ENCODE measurements at regions of chr11 and their contacts with region 1.

Region 1: GRCh38 chr11:72722050-72722748 is 30.0 kb downstream of the ARAP1 start:
- DNase-seq: peak; percentile 80
- H3K4me3 Mint-ChIP-seq: peak overlapping the region; percentile 94
- H3K27ac Mint-ChIP-seq: peak overlapping the region; percentile 96
- H3K4me1 Mint-ChIP-seq: peaks cover 70% of the 10 kb centered on the region
- H3K27me3 Mint-ChIP-seq: no peaks in the 10 kb centered on the region

Region 2: GRCh38 chr11:72683782-72684200 is 38.4 kb before region 1 on chr11:
- intact Hi-C with region 1: loop called (anchors 1 kb)
- DNase-seq: peak; percentile 49
- H3K4me3 Mint-ChIP-seq: no peak overlapping the region
- H3K27ac Mint-ChIP-seq: peak overlapping the region; percentile 50
- H3K4me1 Mint-ChIP-seq: peaks cover 43% of the 10 kb centered on the region
- H3K27me3 Mint-ChIP-seq: peaks cover 10% of the 10 kb centered on the region

Region 3: GRCh38 chr11:72703267-72704008 is 18.8 kb before region 1 on chr11:
- intact Hi-C with region 1: no loop called
- DNase-seq: no peak
- H3K4me3 Mint-ChIP-seq: no peak overlapping the region
- H3K27ac Mint-ChIP-seq: no peak overlapping the region
- H3K4me1 Mint-ChIP-seq: no peaks in the 10 kb centered on the region
- H3K27me3 Mint-ChIP-seq: no peaks in the 10 kb centered on the region

Region 4: DNA sequence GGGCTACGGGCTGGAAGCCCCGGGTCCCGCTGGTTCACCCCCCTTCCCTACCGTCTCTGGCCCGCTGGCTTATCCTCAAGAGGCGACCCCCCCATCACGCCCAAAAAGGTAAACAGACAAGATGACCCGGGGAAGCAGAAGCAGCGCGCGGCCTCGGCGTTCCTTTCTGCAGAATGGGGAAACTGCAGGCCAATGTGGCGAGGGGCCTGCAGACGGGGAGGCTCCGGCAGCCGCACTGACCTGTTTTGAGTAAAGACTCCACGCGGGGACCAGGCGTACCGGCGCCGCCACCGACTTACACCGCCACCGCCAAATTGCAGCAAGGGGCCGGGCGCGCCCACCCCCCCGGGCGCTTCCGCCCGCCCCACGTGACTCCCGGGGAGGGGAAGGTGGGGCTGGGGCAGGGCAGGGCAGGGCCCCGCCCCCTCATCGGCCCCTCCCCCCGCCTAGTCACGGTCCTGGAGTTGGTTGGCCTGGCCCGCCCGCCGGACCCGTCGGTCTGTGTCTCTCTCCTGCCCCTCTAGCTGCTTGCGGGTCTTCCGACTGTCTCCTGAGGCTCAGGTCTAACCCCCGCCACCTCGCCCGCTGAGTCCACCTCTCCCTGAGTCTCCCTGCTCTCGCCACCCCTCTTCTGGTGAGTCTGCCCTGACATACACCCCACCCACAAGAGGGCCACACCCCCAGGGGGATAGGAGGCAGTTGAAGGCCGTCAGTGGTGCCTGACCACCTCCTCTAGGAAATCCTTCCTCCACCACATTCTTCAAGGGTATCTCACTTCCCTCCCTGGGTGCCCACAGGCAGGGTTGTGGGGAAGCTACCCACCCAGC is 30.1 kb after region 1 on chr11 and contains the start of gene ARAP1:
- intact Hi-C with region 1: loop called (anchors 1 kb)
- DNase-seq: peak; percentile 67
- H3K4me3 Mint-ChIP-seq: peak within 1 kb of the TSS; percentile 91
- H3K27ac Mint-ChIP-seq: peak within 1 kb of the TSS; percentile 91
- H3K4me1 Mint-ChIP-seq: peaks cover 42% of the 10 kb centered on the region
- H3K27me3 Mint-ChIP-seq: no peaks in the 10 kb centered on the region
- total RNA-seq, gene ARAP1: 78.8 and 88.6 TPM in 2 replicates

Region 5: DNA sequence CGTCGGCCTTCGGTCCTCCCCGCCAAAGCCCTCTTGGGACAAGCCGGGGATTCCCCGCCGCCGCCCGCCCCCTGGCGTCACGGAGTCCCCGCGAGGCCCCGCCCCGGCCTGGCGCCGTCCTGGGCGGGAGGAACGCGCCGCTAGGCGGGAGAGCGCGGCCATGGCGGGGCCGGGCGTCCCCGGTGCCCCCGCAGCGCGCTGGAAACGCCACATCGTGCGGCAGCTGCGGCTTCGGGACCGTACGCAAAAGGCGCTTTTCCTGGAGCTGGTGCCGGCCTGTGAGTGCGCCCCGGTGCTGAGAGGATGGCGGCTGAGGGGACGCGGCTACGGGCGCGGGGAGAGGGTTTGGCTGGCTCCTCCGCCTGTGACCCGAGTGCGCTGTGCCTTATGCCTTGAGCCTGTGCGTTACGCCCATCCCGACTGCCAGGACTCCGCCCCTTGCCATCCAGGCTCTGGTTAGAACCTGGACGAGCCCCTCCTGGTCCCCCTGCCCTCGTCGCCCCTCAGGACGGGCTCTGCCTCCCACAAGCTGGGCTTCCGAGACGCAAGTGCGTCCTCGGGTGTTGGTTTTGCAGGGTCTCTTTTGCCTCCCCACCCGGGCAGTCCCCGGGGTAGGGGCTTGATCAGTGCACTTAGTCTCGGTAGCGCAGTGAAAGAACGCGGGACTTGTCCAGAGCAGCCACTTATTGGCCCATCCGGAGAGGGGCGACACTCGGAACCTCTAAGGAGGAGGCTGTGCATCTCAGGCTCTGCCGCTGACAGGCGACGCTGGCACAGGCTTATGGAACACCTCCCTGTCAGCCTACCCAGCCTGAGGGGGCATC is 92.3 kb after region 1 on chr11 and contains the start of gene ATG16L2:
- intact Hi-C with region 1: loop called (anchors 1 kb)
- DNase-seq: peak; percentile 90
- H3K4me3 Mint-ChIP-seq: peak within 1 kb of the TSS; percentile 99
- H3K27ac Mint-ChIP-seq: peak within 1 kb of the TSS; percentile 98
- H3K4me1 Mint-ChIP-seq: peaks cover 54% of the 10 kb centered on the region
- H3K27me3 Mint-ChIP-seq: no peaks in the 10 kb centered on the region
- total RNA-seq, gene ATG16L2: 69.2 and 71.1 TPM in 2 replicates

Region 6: DNA sequence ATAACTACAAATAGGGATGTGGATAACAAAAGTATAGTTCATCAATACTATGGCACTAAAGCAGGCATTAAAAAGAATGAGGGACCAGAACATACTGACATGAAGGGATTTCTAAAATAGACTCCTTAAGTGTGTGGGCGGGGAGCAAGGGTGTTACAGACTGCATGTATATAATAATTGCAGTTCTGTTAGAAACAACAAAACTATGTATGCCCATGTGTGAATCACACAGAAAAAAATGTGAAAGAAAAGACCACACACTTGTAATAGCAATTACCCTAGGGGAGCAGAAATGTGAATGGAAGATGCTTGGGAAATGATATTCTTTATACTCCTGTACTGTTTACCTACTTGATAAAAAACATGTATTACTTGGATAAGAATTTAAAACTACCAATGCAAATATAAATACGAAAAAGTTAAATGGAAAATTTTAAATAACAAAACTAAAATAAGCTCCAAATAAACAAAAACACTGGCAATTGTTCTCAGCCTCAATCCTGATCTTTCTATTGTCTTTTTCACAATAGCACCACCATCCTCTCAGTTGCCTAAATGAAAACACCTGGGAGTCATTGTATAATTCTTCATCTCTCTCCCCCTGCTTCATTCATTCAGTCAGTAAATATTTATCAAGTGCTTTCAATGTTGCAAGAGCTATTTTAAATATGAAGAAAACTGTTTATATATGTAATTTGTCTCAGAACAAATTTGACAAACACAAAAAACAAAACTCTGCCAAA is 290.1 kb after region 1 on chr11:
- intact Hi-C with region 1: no loop called
- DNase-seq: no peak
- H3K4me3 Mint-ChIP-seq: no peak overlapping the region
- H3K27ac Mint-ChIP-seq: no peak overlapping the region
- H3K4me1 Mint-ChIP-seq: peaks cover 8% of the 10 kb centered on the region
- H3K27me3 Mint-ChIP-seq: no peaks in the 10 kb centered on the region

Region 7: GRCh38 chr11:73177778-73178577 is 455.8 kb after region 1 on chr11:
- intact Hi-C with region 1: loop called (anchors 1 kb)
- DNase-seq: peak; percentile 68
- H3K4me3 Mint-ChIP-seq: no peak overlapping the region
- H3K27ac Mint-ChIP-seq: no peak overlapping the region
- H3K4me1 Mint-ChIP-seq: peaks cover 30% of the 10 kb centered on the region
- H3K27me3 Mint-ChIP-seq: peaks cover 20% of the 10 kb centered on the region

Region 8: GRCh38 chr11:73242251-73243079 is 520.3 kb after region 1 on chr11:
- intact Hi-C with region 1: loop called (anchors 10 kb)
- DNase-seq: peak; percentile 60
- H3K4me3 Mint-ChIP-seq: no peak overlapping the region
- H3K27ac Mint-ChIP-seq: no peak overlapping the region
- H3K4me1 Mint-ChIP-seq: no peaks in the 10 kb centered on the region
- H3K27me3 Mint-ChIP-seq: peaks cover 12% of the 10 kb centered on the region

Measured in activated T-helper 1 cell treated with anti-CD3 and anti-CD28 coated beads, Interleukin-12 subunit alpha, Interleukin-12 subunit beta, Interleukin-2, Interleukin-4 antibody, amounts not matched to agents 30 ng/mL and 10 ng/mL and 1 ng/mL, durations not matched to agents 14 hours and 24 hours and 36 hours (primary cell).